AG04450 (cell line): ENCODE measurements at regions of chr6 and their contacts with region 1.

Region 1: GRCh38 chr6:166950443-166950821 is 5.9 kb downstream of the RNASET2 start:
- DNase-seq: no peak
- H3K4me3 ChIP-seq: no peak overlapping the region
- H3K27ac ChIP-seq: no peak overlapping the region
- H3K27me3 ChIP-seq: no peaks in the 10 kb centered on the region
- CTCF ChIP-seq: no peak

Region 2: GRCh38 chr6:166499350-166500163 is 450.9 kb before region 1 on chr6:
- CTCF ChIA-PET with region 1: no interaction called
- POLR2A ChIA-PET with region 1: no interaction called
- DNase-seq: no peak
- H3K4me3 ChIP-seq: no peak overlapping the region
- H3K27ac ChIP-seq: no peak overlapping the region
- H3K27me3 ChIP-seq: no peaks in the 10 kb centered on the region
- CTCF ChIP-seq: no peak

Region 3: GRCh38 chr6:166929542-166930189 is 20.8 kb before region 1 on chr6:
- CTCF ChIA-PET with region 1: no interaction called
- POLR2A ChIA-PET with region 1: no interaction called
- DNase-seq: no peak
- H3K4me3 ChIP-seq: no peak overlapping the region
- H3K27ac ChIP-seq: no peak overlapping the region
- H3K27me3 ChIP-seq: no peaks in the 10 kb centered on the region
- CTCF ChIP-seq: no peak

Region 4: DNA sequence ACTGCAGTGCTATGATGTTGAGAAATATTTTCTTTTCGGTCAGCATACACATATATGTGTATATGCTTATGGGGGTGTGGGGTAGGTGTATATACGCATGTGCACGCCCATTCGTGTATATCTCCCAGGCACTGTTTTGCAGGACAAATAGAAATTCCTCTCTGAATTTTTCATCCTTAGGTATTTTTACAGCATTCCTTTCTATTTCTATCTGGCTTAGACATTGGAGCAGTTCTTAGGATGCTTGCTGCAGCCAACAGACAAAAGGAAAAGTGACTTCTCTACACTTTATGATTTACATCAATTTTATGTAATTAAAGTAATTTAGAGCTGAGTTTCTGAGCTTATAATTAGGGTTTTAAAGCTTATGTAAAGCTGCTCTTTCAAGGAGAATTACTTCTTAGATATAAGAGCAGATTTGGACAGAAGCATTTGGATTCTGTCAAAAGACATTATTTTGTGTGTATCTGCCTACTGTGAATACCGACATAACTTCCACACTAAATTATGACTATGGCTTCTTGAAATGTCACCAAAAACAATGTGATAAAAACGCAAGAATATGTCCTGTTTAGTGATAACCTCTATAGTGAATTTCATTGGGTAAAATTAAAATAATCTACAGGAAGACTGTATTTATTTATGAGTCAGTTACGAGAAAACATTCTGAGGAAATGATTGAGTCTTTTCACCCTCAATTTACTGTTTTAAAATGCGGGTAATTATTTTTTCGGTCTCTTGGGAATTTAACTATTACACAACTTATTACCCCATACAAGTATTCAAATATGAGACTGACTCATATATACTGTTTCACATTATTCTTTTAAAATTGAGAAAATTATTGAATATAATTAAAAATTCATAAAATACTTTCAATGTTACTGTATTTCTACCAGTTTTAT is 27.4 kb after region 1 on chr6:
- CTCF ChIA-PET with region 1: interaction called, 10 read pairs
- POLR2A ChIA-PET with region 1: no interaction called
- DNase-seq: no peak
- H3K4me3 ChIP-seq: no peak overlapping the region
- H3K27ac ChIP-seq: no peak overlapping the region
- H3K27me3 ChIP-seq: no peaks in the 10 kb centered on the region
- CTCF ChIP-seq: no peak

Region 5: GRCh38 chr6:167426651-167427050 is 476.2 kb after region 1 on chr6:
- CTCF ChIA-PET with region 1: no interaction called
- POLR2A ChIA-PET with region 1: no interaction called
- DNase-seq: no peak
- H3K4me3 ChIP-seq: no peak overlapping the region
- H3K27ac ChIP-seq: no peak overlapping the region
- H3K27me3 ChIP-seq: no peaks in the 10 kb centered on the region
- CTCF ChIP-seq: no peak